GM12878 (cell line): ENCODE measurements at regions of chr17 and their contacts with region 1.

Region 1: DNA sequence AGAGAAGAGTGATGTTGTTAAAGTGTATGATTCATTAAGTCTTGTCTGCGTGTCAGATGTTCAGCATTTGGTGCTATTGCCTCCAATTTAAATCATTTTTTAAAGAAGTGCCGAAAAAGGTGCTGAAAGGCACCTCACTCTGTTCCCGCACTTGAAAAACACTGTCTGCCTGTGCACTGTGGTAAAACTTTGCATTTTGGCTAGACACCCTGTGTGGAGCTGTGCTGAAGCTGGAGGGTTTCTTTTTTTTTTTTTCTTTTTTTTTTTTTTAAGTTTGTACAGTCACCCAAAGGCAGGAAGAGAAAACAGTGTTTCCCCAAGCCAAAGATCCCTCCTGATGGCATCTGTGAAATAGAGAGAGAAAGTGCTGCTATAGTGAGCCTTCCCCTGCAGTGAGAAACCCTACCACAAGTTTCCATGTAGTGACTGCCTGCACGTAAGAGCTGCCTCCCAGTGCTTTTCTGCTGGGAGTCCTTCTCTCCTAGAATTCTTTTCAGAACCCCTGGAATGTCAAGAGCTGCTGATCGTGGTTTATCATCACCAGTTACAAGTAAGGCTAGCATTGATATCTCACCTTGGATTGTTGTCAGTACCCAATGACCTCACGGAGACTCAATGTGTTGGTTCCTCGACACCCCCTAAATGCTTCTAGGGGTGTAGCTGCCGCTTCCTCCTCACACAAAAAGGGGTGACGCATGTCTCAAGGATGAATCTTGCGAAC is 116.0 kb upstream of the SOX9 start:
- DNase-seq: peak; percentile 79
- ATAC-seq: peak; percentile 77
- H3K4me3 ChIP-seq: peak overlapping the region; percentile 35
- H3K27ac ChIP-seq: peak overlapping the region; percentile 87
- H3K4me1 ChIP-seq: peaks cover 7% of the 10 kb centered on the region; the same call in 1 of the 2 replicates
- H3K27me3 ChIP-seq: no peaks in the 10 kb centered on the region
- CTCF ChIP-seq: no peak
- EP300 ChIP-seq: peak in 1 of 2 experiments; percentile 11; a peak in 2 of 4 replicates
- POLR2A ChIP-seq: no peak
- RAD21 ChIP-seq: peak; percentile 10; the same call in 1 of the 2 replicates

Region 2: GRCh38 chr17:71849783-71850768 is 154.7 kb before region 1 on chr17:
- CTCF ChIA-PET with region 1: no interaction called
- POLR2A ChIA-PET with region 1: no interaction called
- RAD21 ChIA-PET with region 1: no interaction called
- SMC1A ChIA-PET with region 1: interaction called, 3 read pairs
- in situ Hi-C with region 1: no loop called
- intact Hi-C with region 1: loop called (anchors 2 kb)
- DNase-seq: no peak
- ATAC-seq: peak; percentile 90
- H3K4me3 ChIP-seq: no peak overlapping the region
- H3K27ac ChIP-seq: peak overlapping the region; percentile 31; the same call in 1 of the 2 replicates
- H3K4me1 ChIP-seq: no peaks in the 10 kb centered on the region
- H3K27me3 ChIP-seq: no peaks in the 10 kb centered on the region
- CTCF ChIP-seq: no peak
- EP300 ChIP-seq: no peak
- POLR2A ChIP-seq: no peak
- RAD21 ChIP-seq: no peak

Region 3: DNA sequence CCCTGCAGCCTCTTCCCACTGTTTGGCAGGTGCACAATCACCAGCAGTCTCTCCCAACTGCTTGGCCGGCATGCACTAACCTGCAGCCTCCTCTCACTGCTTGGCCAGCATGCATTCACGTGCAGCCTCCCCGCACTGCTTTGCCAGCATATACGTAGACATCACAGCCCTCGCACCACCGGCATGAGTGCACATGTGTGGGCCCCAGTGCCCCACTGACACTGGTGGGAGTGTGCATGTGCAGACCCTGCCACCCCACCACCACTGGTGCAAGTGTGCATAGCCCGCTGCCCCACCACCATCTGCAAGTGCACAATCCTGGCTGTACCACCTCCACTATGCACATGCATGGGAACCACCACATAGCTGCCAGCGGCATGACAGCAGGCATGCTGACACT is 11.4 kb before region 1 on chr17:
- CTCF ChIA-PET with region 1: interaction called, 6 read pairs
- POLR2A ChIA-PET with region 1: interaction called, 3 read pairs
- RAD21 ChIA-PET with region 1: interaction called, 6 read pairs
- SMC1A ChIA-PET with region 1: interaction called, 10 read pairs
- in situ Hi-C with region 1: no loop called
- intact Hi-C with region 1: no loop called
- DNase-seq: no peak
- ATAC-seq: no peak
- H3K4me3 ChIP-seq: no peak overlapping the region
- H3K27ac ChIP-seq: no peak overlapping the region
- H3K4me1 ChIP-seq: no peaks in the 10 kb centered on the region
- H3K27me3 ChIP-seq: no peaks in the 10 kb centered on the region
- CTCF ChIP-seq: no peak
- EP300 ChIP-seq: no peak
- POLR2A ChIP-seq: no peak
- RAD21 ChIP-seq: no peak

Region 4: GRCh38 chr17:72021417-72022041 is 16.8 kb after region 1 on chr17:
- CTCF ChIA-PET with region 1: interaction called, 9 read pairs
- POLR2A ChIA-PET with region 1: interaction called, 3 read pairs
- RAD21 ChIA-PET with region 1: interaction called, 16 read pairs
- SMC1A ChIA-PET with region 1: interaction called, 15 read pairs
- in situ Hi-C with region 1: no loop called
- intact Hi-C with region 1: no loop called
- DNase-seq: no peak
- ATAC-seq: peak; percentile 86
- H3K4me3 ChIP-seq: no peak overlapping the region
- H3K27ac ChIP-seq: peak overlapping the region; percentile 85
- H3K4me1 ChIP-seq: peaks cover 42% of the 10 kb centered on the region
- H3K27me3 ChIP-seq: no peaks in the 10 kb centered on the region
- CTCF ChIP-seq: no peak
- EP300 ChIP-seq: no peak
- POLR2A ChIP-seq: no peak
- RAD21 ChIP-seq: 0 out of 2 replicates have a peak, but pooled peaks have one; percentile 1

Region 5: GRCh38 chr17:72030067-72030899 is 25.5 kb after region 1 on chr17:
- CTCF ChIA-PET with region 1: interaction called, 5 read pairs
- POLR2A ChIA-PET with region 1: interaction called, 34 read pairs
- RAD21 ChIA-PET with region 1: interaction called, 41 read pairs
- SMC1A ChIA-PET with region 1: interaction called, 30 read pairs
- in situ Hi-C with region 1: no loop called
- intact Hi-C with region 1: loop called (anchors 1 kb)
- DNase-seq: peak; percentile 71
- ATAC-seq: peak; percentile 81
- H3K4me3 ChIP-seq: peak overlapping the region; percentile 80
- H3K27ac ChIP-seq: peak overlapping the region; percentile 91
- H3K4me1 ChIP-seq: peaks cover 45% of the 10 kb centered on the region
- H3K27me3 ChIP-seq: no peaks in the 10 kb centered on the region
- CTCF ChIP-seq: peak; percentile 30 to 48 (median 40); a peak in 4 of 6 replicates
- EP300 ChIP-seq: 0 out of 4 replicates have a peak, but pooled peaks of 1 of the 2 experiments have one; percentile 4
- POLR2A ChIP-seq: peak; percentile 65
- RAD21 ChIP-seq: peak; percentile 25; the same call in 1 of the 2 replicates